ENCODE measurements at regions of chr3 and their contacts with region 1.

Region 1: DNA sequence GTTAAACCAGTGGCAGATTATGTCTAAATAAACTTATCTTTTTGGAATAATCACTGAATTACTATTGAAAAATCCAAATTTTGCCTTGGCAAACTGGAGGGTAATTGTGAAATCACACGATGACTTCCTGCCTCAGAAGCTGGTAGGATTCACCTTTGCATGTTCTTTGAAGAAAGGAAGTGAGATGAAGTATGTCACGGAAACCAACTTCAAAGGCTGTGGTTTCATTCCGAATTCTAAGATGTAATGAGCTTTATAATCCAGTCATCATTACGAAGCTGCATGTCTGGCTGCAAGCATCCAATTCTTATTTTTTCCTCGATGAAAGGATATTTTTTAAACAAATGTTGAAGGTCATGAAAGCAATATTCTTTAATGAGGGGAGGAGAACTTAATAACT is 15.0 kb upstream of the ZBED2 start:
- DNase-seq: peak in 7 of 9 donors; percentile 79 to 91 (median 89)
- ATAC-seq: peak; percentile 94
- H3K4me3 ChIP-seq: peak overlapping the region; percentile 2
- H3K4me3 Mint-ChIP-seq: peak overlapping the region; percentile 48 to 84 (median 74)
- H3K27ac ChIP-seq: peak overlapping the region; percentile 47
- H3K27ac Mint-ChIP-seq: peak overlapping the region; percentile 41 to 96 (median 90)
- H3K4me1 ChIP-seq: peaks cover 27 to 38% of the 10 kb centered on the region in 2 donors
- H3K4me1 Mint-ChIP-seq: peaks cover 32 to 90% (median 61%) of the 10 kb centered on the region in 7 donors
- H3K27me3 ChIP-seq: no peaks in the 10 kb centered on the region
- H3K27me3 Mint-ChIP-seq: no peaks in the 10 kb centered on the region

Region 2: GRCh38 chr3:111311709-111312235 is 298.4 kb before region 1 on chr3:
- CTCF ChIA-PET with region 1: no interaction called
- POLR2A ChIA-PET with region 1: interaction called, 3 read pairs
- intact Hi-C with region 1: loop called in 1 of 2 experiments (anchors 5 kb)
- DNase-seq: peak in 1 of 9 donors; percentile 19
- ATAC-seq: peak; percentile 62
- H3K4me3 ChIP-seq: no peak overlapping the region
- H3K4me3 Mint-ChIP-seq: peak overlapping the region in 8 of 10 donors; percentile 15 to 76 (median 56)
- H3K27ac ChIP-seq: peak overlapping the region; percentile 63
- H3K27ac Mint-ChIP-seq: peak overlapping the region in 7 of 9 donors; percentile 79 to 99 (median 92)
- H3K4me1 ChIP-seq: peaks cover 22 to 51% of the 10 kb centered on the region in 2 donors
- H3K4me1 Mint-ChIP-seq: peaks cover 0 to 57% (median 0%) of the 10 kb centered on the region in 7 donors
- H3K27me3 ChIP-seq: no peaks in the 10 kb centered on the region
- H3K27me3 Mint-ChIP-seq: no peaks in the 10 kb centered on the region

Region 3: GRCh38 chr3:111338059-111338698 is 272.0 kb before region 1 on chr3:
- CTCF ChIA-PET with region 1: no interaction called
- POLR2A ChIA-PET with region 1: no interaction called
- intact Hi-C with region 1: no loop called
- DNase-seq: peak in 5 of 9 donors; percentile 22 to 43 (median 23)
- ATAC-seq: no peak
- H3K4me3 ChIP-seq: no peak overlapping the region
- H3K4me3 Mint-ChIP-seq: no peak overlapping the region
- H3K27ac ChIP-seq: no peak overlapping the region
- H3K27ac Mint-ChIP-seq: peak overlapping the region in 2 of 9 donors; percentile 3 to 4
- H3K4me1 ChIP-seq: no peaks in the 10 kb centered on the region
- H3K4me1 Mint-ChIP-seq: peaks cover 2 to 31% (median 12%) of the 10 kb centered on the region in 7 donors
- H3K27me3 ChIP-seq: no peaks in the 10 kb centered on the region
- H3K27me3 Mint-ChIP-seq: no peaks in the 10 kb centered on the region

Region 4: GRCh38 chr3:111577794-111578685 is 32.1 kb before region 1 on chr3:
- CTCF ChIA-PET with region 1: no interaction called
- POLR2A ChIA-PET with region 1: no interaction called
- intact Hi-C with region 1: loop called in 1 of 2 experiments (anchors 2 kb)
- DNase-seq: peak in 1 of 9 donors; percentile 7
- ATAC-seq: peak; percentile 71
- H3K4me3 ChIP-seq: no peak overlapping the region
- H3K4me3 Mint-ChIP-seq: peak overlapping the region in 1 of 10 donors; percentile 13
- H3K27ac ChIP-seq: no peak overlapping the region
- H3K27ac Mint-ChIP-seq: peak overlapping the region in 8 of 9 donors; percentile 27 to 83 (median 60)
- H3K4me1 ChIP-seq: no peaks in the 10 kb centered on the region
- H3K4me1 Mint-ChIP-seq: peaks cover 18 to 72% (median 61%) of the 10 kb centered on the region in 7 donors
- H3K27me3 ChIP-seq: no peaks in the 10 kb centered on the region
- H3K27me3 Mint-ChIP-seq: no peaks in the 10 kb centered on the region

Region 5: GRCh38 chr3:111650378-111651275 is 40.4 kb after region 1 on chr3:
- CTCF ChIA-PET with region 1: no interaction called
- POLR2A ChIA-PET with region 1: no interaction called
- intact Hi-C with region 1: loop called in 1 of 2 experiments (anchors 5 kb)
- DNase-seq: no peak
- ATAC-seq: no peak
- H3K4me3 ChIP-seq: no peak overlapping the region
- H3K4me3 Mint-ChIP-seq: no peak overlapping the region
- H3K27ac ChIP-seq: no peak overlapping the region
- H3K27ac Mint-ChIP-seq: peak overlapping the region in 2 of 9 donors; percentile 32 to 55
- H3K4me1 ChIP-seq: no peaks in the 10 kb centered on the region
- H3K4me1 Mint-ChIP-seq: peaks cover 0 to 16% (median 0%) of the 10 kb centered on the region in 7 donors
- H3K27me3 ChIP-seq: no peaks in the 10 kb centered on the region
- H3K27me3 Mint-ChIP-seq: no peaks in the 10 kb centered on the region

Region 6: GRCh38 chr3:112074721-112075497 is 464.7 kb after region 1 on chr3:
- CTCF ChIA-PET with region 1: no interaction called
- POLR2A ChIA-PET with region 1: no interaction called
- intact Hi-C with region 1: loop called in 1 of 2 experiments (anchors 2 kb)
- DNase-seq: peak in 8 of 9 donors; percentile 29 to 60 (median 52)
- ATAC-seq: peak; percentile 88
- H3K4me3 ChIP-seq: no peak overlapping the region
- H3K4me3 Mint-ChIP-seq: peak overlapping the region; percentile 32 to 76 (median 56)
- H3K27ac ChIP-seq: peak overlapping the region; percentile 32
- H3K27ac Mint-ChIP-seq: peak overlapping the region; percentile 72 to 95 (median 85)
- H3K4me1 ChIP-seq: peaks cover 4 to 17% of the 10 kb centered on the region in 2 donors
- H3K4me1 Mint-ChIP-seq: peaks cover 17 to 57% (median 51%) of the 10 kb centered on the region in 7 donors
- H3K27me3 ChIP-seq: no peaks in the 10 kb centered on the region
- H3K27me3 Mint-ChIP-seq: peaks cover 0 to 3% (median 0%) of the 10 kb centered on the region in 5 donors